CD8-positive, alpha-beta memory T cell (primary cell): ENCODE measurements at regions of chr2 and their contacts with region 1.

Region 1: GRCh38 chr2:219560037-219560892 is 11.1 kb downstream of the OBSL1 start:
- DNase-seq: peak in 3 of 5 donors; percentile 12 to 46 (median 30)
- H3K4me3 ChIP-seq: no peak overlapping the region
- H3K4me3 Mint-ChIP-seq: no peak overlapping the region
- H3K27ac ChIP-seq: no peak overlapping the region
- H3K27ac Mint-ChIP-seq: no peak overlapping the region
- H3K4me1 ChIP-seq: no peaks in the 10 kb centered on the region
- H3K4me1 Mint-ChIP-seq: no peaks in the 10 kb centered on the region
- H3K27me3 ChIP-seq: no peaks in the 10 kb centered on the region
- H3K27me3 Mint-ChIP-seq: peaks cover 12 to 54% of the 10 kb centered on the region in 2 donors

Region 2: DNA sequence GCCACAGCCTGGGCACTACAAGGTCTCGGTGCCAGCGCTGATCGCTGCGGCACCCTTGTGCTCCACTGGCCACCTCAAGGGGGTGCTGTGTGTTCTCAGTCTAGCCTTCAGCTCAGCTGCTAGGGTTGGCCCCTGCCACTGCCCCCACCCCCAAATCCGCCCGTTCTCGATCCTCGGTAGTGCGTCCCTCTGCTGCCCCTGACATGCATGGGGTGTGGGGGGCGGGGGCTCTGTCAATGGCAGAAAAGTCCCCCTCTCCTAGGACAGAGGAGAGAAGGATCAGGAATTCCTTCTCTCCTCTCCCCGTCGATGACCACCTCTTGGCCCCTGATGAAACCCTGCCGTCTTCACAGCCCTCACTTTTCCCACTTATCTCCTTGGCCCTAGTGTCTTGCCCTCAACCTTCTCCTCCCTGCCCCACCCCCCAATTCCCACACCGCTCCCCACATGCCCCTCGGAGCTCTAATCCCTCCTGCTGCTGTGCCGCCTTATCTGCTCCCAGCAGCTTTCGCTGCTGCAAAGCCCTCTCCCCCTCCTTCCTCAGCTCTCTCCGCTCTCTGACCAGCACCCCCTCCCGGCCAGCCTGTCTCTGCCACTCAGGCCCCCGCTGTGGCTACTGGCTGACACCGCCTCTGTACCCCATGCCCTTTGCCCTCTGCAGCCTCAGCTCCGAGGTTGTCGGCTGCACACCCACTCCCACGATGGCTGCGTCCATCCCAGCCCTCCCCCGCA is 50.3 kb before region 1 on chr2:
- CTCF ChIA-PET with region 1: no interaction called
- POLR2A ChIA-PET with region 1: no interaction called
- DNase-seq: peak in 4 of 5 donors; percentile 7 to 42 (median 29)
- H3K4me3 ChIP-seq: no peak overlapping the region
- H3K4me3 Mint-ChIP-seq: peak overlapping the region in 6 of 7 donors; percentile 19 to 71 (median 58)
- H3K27ac ChIP-seq: peak overlapping the region; percentile 43
- H3K27ac Mint-ChIP-seq: peak overlapping the region in 1 of 8 donors; percentile 21
- H3K4me1 ChIP-seq: peaks cover 15% of the 10 kb centered on the region
- H3K4me1 Mint-ChIP-seq: peaks cover 17 to 37% (median 20%) of the 10 kb centered on the region in 3 donors
- H3K27me3 ChIP-seq: peaks cover 12% of the 10 kb centered on the region
- H3K27me3 Mint-ChIP-seq: peaks cover 42 to 56% of the 10 kb centered on the region in 2 donors

Region 3: GRCh38 chr2:219543601-219544358 is 16.5 kb before region 1 on chr2 and contains the starts of genes CHPF and TMEM198:
- CTCF ChIA-PET with region 1: interaction called, 34 read pairs
- POLR2A ChIA-PET with region 1: no interaction called
- DNase-seq: peak; percentile 84 to 94 (median 88)
- H3K4me3 ChIP-seq: peak within 1 kb of the TSS; percentile 81
- H3K4me3 Mint-ChIP-seq: peak within 1 kb of the TSS; percentile 81 to 94 (median 86)
- H3K27ac ChIP-seq: peak within 1 kb of the TSS; percentile 69
- H3K27ac Mint-ChIP-seq: peak within 1 kb of the TSS; percentile 73 to 92 (median 86)
- H3K4me1 ChIP-seq: peaks cover 18% of the 10 kb centered on the region
- H3K4me1 Mint-ChIP-seq: peaks cover 22 to 30% (median 27%) of the 10 kb centered on the region in 3 donors
- H3K27me3 ChIP-seq: no peaks in the 10 kb centered on the region
- H3K27me3 Mint-ChIP-seq: peaks cover 4 to 14% of the 10 kb centered on the region in 2 donors
- total RNA-seq, gene CHPF: 32.9 to 36.5 TPM
- total RNA-seq, gene TMEM198: 5.2 to 6.0 TPM

Region 4: GRCh38 chr2:219571311-219572236 is 11.3 kb after region 1 on chr2 and contains the start of gene OBSL1:
- CTCF ChIA-PET with region 1: interaction called, 12 read pairs
- POLR2A ChIA-PET with region 1: no interaction called
- DNase-seq: no peak
- H3K4me3 ChIP-seq: no peak within 1 kb of the TSS
- H3K4me3 Mint-ChIP-seq: peak within 1 kb of the TSS in 6 of 7 donors; percentile 9 to 81 (median 38)
- H3K27ac ChIP-seq: peak within 1 kb of the TSS; percentile 63
- H3K27ac Mint-ChIP-seq: no peak within 1 kb of the TSS
- H3K4me1 ChIP-seq: no peaks in the 10 kb centered on the region
- H3K4me1 Mint-ChIP-seq: peaks cover 0 to 7% (median 0%) of the 10 kb centered on the region in 3 donors
- H3K27me3 ChIP-seq: peaks cover 12% of the 10 kb centered on the region
- H3K27me3 Mint-ChIP-seq: peaks cover 25 to 70% of the 10 kb centered on the region in 2 donors
- total RNA-seq, gene OBSL1: 0.48 to 0.69 TPM

Region 5: DNA sequence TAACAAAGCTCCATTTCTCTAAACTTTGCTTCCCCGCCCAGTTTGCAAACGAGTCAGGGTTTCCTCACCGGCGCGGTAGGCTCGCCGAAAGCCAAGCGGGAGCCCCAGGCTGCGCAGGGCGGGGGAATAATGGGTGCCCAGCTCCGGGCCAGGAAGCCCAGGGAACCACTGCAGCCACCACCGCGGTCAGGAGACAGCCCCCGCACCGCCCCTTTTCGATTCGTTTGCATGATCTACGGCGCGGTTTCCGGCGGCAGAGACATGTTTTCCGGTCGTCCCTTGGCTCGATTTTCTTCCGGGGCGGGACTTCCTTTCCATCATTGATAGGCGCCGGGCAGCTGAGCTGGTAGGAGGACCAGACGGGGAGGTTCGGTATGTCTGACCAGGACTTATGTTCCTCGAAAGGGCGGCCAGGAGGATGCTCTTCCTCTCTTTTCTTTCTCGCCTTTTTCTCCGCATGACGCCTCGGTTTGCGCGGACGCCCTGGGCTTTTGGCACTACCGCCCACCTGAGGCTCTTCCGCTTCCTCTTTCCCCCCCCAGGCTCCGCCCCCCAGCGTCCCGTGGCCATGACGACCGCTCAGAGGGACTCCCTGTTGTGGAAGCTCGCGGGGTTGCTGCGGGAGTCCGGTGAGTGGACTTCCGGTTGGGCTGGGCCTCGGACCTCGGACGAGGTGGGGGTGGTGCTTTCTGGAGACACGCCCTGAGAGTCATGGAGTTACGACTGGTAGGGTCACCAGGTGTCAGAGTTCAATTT is 37.5 kb after region 1 on chr2 and contains the start of gene STK11IP:
- CTCF ChIA-PET with region 1: interaction called, 12 read pairs
- POLR2A ChIA-PET with region 1: no interaction called
- DNase-seq: peak; percentile 86 to 91 (median 88)
- H3K4me3 ChIP-seq: peak within 1 kb of the TSS; percentile 69
- H3K4me3 Mint-ChIP-seq: peak within 1 kb of the TSS; percentile 95 to 98 (median 97)
- H3K27ac ChIP-seq: peak within 1 kb of the TSS; percentile 72
- H3K27ac Mint-ChIP-seq: peak within 1 kb of the TSS; percentile 91 to 98 (median 98)
- H3K4me1 ChIP-seq: peaks cover 14% of the 10 kb centered on the region
- H3K4me1 Mint-ChIP-seq: peaks cover 15 to 26% (median 26%) of the 10 kb centered on the region in 3 donors
- H3K27me3 ChIP-seq: no peaks in the 10 kb centered on the region
- H3K27me3 Mint-ChIP-seq: peaks cover 1 to 11% of the 10 kb centered on the region in 2 donors
- total RNA-seq, gene STK11IP: 26.2 to 32.2 TPM

Region 6: GRCh38 chr2:219675221-219675620 is 115.0 kb after region 1 on chr2:
- CTCF ChIA-PET with region 1: no interaction called
- POLR2A ChIA-PET with region 1: no interaction called
- DNase-seq: no peak
- H3K4me3 ChIP-seq: no peak overlapping the region
- H3K4me3 Mint-ChIP-seq: no peak overlapping the region
- H3K27ac ChIP-seq: no peak overlapping the region
- H3K27ac Mint-ChIP-seq: no peak overlapping the region
- H3K4me1 ChIP-seq: no peaks in the 10 kb centered on the region
- H3K4me1 Mint-ChIP-seq: no peaks in the 10 kb centered on the region
- H3K27me3 ChIP-seq: peaks cover 3% of the 10 kb centered on the region
- H3K27me3 Mint-ChIP-seq: peaks cover 22 to 62% of the 10 kb centered on the region in 2 donors